AG04450 (cell line): ENCODE measurements at regions of chr3 and their contacts with region 1.

Region 1: DNA sequence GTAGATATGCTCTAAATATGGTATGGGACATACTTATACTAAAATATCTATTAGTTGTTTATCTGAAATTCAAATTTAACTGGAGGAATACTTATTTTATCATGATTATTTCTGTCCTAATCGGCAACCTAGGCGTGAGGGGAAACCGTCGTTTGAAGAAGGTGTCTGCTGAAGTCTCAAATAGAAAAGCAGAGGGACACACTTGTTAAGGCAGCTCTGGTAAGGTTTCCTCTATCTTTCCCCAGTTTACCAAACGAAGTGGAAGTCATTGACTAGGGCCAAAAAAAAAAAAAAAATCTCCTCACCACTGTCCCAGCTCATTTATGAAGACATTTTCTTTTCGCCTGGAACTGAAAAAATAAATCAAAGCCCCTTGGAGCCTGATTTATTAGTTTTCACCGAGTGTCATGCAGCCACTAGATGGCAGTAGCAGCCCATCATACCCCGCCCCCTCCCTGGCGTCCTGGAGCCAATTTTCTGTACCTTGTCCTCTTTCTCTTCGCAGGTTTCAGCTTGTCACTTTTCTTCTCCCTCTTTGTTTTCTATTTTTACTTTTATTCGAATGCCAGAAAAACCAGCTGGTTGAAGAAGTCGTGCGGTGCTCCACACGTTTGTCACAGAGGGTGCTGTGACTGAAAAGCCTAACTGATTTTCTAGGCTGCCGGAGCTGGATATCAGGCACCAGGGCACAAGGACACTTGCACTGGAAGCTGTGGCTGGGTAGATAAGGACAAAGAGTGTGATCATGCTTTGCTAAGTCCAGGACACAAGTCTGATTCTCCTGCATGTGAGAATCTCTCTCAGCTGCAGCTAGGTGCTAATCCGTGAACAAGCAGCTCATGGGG is 238.7 kb downstream of the ZPLD1 start:
- DNase-seq: no peak
- H3K4me3 ChIP-seq: no peak overlapping the region
- H3K27ac ChIP-seq: no peak overlapping the region
- H3K27me3 ChIP-seq: no peaks in the 10 kb centered on the region
- CTCF ChIP-seq: peak; percentile 90

Region 2: GRCh38 chr3:102460579-102460978 is 212.9 kb before region 1 on chr3:
- CTCF ChIA-PET with region 1: no interaction called
- POLR2A ChIA-PET with region 1: interaction called, 10 read pairs
- DNase-seq: no peak
- H3K4me3 ChIP-seq: no peak overlapping the region
- H3K27ac ChIP-seq: no peak overlapping the region
- H3K27me3 ChIP-seq: no peaks in the 10 kb centered on the region
- CTCF ChIP-seq: no peak

Region 3: DNA sequence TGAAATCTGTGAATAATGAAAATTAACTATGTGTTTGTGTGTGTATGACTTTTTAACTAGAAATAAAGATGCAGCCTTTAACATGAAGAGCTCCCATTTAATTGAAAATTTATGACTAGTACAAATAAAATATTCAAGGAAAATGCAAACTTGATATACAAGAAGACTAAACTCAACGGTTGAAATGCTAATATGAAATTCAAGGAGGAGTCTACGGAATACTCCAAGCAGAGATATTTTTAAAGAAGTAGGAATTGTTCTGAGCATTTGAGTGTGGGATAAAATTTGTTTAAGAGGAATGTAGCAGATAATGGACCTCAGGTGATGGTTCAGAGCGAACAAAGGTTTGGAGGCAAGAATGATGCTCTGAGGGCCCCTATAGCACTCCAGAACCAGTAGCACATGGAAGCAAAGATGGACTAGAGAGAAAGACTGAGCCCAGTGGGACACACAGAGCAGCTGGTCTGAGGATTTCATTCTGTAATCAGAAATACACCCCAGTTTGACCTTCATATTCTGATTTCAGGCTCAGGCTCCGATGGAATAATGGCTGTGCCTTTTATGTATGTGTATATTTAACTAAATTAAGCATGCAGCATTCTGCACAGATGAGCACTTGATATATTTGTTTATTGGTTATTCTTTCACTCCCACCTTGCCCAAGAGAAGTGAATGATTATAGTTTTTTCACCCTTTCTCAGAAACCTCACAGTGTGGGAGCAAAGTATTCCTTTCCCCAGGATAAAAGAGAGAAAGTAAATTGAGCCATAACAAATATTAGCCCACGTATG is 11.6 kb before region 1 on chr3:
- CTCF ChIA-PET with region 1: interaction called, 16 read pairs
- POLR2A ChIA-PET with region 1: no interaction called
- DNase-seq: no peak
- H3K4me3 ChIP-seq: no peak overlapping the region
- H3K27ac ChIP-seq: no peak overlapping the region
- H3K27me3 ChIP-seq: no peaks in the 10 kb centered on the region
- CTCF ChIP-seq: no peak

Region 4: DNA sequence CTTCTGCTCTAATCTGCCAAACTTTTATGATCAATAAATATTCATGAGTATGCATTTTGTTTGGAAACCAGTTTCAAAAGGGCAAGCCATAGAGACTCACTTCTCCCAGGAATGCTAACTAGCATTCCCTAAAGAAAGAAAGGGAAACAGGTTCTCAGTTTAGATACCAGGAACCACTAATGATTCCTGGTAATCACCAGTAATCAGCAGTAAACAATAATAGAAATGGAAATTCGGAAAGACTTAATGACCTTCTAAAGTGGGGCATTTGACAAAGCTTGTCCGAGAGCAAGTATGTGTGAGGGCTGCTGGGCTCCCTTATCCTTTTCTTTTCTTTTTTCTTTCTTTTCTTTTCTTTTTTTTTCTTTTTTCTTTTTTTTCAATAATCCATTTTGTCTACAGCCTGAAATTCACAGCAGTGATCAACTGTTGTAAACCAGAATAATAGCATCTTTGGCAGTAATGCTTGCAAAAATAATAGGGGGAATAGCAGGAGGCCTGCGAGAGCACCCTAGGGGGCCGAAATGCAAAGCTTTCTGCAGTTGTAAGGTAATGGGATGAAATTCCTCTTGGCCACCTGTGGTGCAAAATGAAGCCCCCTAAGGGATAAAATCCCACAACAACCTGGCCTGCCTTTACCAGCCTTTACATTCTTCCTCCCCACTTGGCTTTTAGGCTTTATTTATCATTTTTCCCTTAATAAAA is 14.5 kb after region 1 on chr3:
- CTCF ChIA-PET with region 1: interaction called, 67 read pairs
- POLR2A ChIA-PET with region 1: no interaction called
- DNase-seq: no peak
- H3K4me3 ChIP-seq: no peak overlapping the region
- H3K27ac ChIP-seq: no peak overlapping the region
- H3K27me3 ChIP-seq: peaks cover 2% of the 10 kb centered on the region
- CTCF ChIP-seq: no peak